ENCODE measurements at regions of chr17 and their contacts with region 1.

Region 1: DNA sequence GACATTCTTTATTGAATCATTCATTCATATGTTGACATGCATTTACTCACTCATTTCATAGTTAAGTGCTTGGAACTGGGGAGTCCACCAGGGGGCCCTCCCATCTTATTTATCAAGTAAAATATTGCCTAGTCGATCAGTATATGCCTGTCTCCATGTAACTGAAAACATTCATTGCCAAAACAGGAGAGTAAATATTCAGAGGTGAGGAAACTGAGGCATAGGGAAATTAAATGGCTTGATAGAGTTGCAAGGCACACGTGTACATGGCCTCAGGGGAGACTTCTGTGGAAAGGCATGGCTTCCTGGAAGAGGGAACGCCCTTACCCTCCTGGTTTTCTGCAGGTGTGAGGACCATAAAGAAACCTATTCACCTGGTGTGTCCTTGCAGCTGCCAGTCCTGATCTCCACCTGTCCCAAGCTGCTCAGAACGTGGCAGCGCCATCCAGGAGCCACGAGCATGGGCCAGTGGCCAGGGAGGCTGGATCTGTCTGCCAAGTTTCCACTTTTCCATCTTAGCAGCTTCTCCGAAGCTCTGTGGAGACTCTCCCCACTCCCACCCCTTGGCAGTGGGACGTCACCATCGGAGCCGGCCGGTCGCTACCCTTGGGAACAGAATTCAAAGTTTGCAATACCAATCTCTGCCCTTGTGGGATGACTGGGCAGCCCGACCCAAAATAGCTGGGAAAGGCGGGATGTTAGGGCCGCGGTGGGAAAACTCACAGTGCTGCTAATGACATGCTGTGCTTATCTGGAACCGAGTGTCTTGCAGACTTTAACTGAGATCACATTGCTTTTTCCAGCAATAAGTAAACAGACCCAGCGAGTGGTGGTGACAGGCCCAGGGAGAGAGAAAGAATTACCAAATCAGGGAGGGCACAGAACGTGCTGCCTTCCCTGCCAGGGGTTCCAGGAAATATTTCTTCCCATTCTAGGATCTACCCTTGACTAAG is 4.1 kb upstream of the C1QTNF1 start:
- DNase-seq: peak; percentile 86
- ATAC-seq: peak; percentile 51

Region 2: DNA sequence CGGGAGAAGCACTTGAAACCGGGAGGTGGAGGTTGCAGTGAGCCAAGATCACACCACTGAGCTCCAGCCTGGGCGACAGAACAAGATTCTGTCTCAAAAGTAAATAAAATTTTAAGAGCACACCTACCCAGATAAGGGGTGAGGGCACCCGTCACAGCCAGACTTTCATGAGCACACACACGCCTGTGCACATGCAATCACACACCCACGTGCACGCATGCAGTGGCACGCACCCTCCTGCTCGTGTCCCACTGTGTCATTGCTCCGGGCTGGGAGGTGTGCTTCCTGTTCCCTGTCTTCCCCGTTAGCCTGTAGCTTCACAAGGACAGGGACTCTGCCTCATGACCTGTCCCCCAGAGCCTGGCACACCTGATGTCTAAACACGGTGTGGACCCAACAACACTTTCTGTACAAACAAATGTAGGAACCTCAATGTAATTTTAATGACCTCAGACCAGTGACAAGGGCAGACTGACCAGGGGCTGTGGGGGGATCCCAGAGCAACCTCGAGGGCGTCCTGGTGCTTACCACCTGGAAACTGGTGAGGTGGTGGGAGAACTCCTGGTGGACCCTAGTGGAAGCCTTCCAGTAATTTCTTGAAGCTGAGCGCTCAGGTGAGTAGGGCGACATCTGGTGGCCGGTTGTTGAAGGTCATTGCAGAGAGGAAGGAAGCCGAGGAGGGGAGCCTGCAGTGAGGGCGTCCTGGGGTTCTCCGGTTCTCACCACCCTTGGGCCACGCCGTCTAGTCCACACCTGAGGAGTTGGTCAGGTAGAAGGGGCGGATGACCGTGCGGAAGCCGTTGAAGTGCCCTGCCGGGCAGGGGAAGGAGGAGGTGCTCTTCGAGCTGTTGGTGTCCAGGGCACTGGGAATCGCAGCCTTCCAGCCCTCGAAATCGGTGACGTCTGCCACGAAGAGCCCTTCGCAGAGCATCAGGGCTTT is 48.8 kb before region 1 on chr17:
- intact Hi-C with region 1: no loop called
- DNase-seq: peak; percentile 88
- ATAC-seq: peak; percentile 45

Region 3: GRCh38 chr17:79045842-79046196 is 25.9 kb after region 1 on chr17:
- intact Hi-C with region 1: loop called (anchors 2 kb)
- DNase-seq: peak; percentile 91
- ATAC-seq: peak; percentile 68

Region 4: DNA sequence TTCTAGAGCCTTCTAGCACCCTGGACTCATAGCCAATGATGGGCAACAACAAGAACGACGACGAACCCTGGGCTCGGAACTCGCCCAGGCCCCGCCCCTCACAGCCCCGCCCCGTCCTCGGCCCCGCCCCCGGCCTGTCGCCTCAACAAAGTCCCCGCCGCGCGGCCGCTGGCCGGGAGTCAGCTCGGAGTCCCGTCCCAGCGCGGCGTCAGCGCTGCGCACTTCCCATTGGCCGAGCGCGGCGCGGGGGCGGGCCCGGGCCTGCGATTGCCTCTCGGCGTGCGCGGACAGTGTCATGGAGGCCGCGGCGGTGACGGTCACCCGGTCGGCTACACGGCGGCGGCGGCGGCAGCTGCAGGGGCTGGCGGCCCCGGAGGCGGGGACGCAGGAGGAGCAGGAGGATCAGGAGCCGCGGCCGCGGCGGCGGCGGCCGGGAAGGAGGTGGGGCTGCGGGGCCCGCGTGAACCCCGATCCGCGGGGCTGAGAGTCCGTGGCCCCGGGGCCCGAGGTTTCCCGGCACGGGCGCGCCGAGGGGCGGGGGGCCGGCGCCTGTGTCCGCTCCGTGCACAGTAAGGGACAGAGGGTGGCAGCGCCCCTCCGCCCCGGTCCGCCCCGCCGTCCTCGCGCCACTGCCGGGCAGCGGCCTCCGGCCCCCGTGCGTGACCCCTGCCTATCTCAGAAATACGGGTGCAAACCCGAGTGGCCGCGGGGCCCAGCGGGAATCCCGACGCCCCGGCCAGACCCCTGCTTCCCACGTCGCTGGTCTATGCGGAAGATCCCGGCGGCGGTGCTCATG is 54.9 kb after region 1 on chr17 and contains the start of gene ENGASE:
- intact Hi-C with region 1: loop called (anchors 2 kb)
- DNase-seq: peak; percentile 99
- ATAC-seq: peak; percentile 98
- total RNA-seq, gene ENGASE: 29.8 TPM

Region 5: DNA sequence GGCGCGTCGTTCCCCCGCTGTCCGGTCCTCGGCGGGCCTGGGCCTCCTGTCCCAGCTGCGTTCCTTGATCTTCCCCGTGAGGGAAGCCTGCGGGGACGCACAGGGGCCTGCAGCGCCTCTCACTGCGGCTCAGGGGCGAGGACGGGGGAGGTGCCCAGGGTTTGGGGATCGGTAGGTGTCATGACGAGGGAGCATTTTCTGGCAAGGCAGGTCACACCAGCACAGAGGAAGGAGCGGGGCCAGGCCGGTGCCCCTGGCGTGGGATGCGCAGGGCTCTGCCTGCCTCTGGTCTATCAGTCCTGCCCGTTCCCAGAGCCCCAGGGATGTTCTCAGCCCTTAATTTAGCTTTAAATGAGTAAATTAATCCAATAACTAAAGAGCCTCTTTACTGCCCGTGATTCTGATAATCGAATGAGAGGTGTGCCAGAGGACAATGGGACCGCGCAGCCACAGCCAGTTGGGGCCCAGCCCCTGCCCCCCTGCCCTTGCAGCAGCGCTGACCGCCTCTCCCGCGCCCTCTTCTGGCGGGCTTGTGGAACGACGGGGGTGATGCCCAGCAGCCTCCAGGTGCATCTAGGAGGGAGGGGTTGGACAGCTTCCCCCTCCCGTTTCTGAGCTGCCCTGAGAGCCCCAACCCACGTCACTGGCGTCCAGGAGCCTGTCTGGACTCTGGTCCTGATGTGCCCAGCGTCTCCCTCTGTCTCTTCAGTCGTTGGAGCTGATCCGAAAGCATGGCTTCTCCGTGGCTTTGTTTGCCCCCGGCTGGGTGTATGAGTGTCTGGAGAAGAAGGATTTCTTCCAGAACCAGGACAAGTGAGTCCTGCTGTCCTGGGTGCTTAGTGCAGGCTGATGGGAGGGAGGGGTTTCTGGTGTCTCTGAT is 62.6 kb after region 1 on chr17:
- intact Hi-C with region 1: loop called (anchors 2 kb)
- DNase-seq: peak; percentile 81
- ATAC-seq: peak; percentile 43

Region 6: GRCh38 chr17:79393358-79394202 is 373.7 kb after region 1 on chr17:
- intact Hi-C with region 1: loop called (anchors 5 kb)
- DNase-seq: peak; percentile 89
- ATAC-seq: peak; percentile 86

Measured in Right ventricle myocardium inferior (tissue), 1 donor.